Activated CD4-positive, alpha-beta T cell treated with anti-CD3 and anti-CD28 coated beads for 36 hours (primary cell): ENCODE measurements at regions of chr9 and their contacts with region 1.

Region 1: DNA sequence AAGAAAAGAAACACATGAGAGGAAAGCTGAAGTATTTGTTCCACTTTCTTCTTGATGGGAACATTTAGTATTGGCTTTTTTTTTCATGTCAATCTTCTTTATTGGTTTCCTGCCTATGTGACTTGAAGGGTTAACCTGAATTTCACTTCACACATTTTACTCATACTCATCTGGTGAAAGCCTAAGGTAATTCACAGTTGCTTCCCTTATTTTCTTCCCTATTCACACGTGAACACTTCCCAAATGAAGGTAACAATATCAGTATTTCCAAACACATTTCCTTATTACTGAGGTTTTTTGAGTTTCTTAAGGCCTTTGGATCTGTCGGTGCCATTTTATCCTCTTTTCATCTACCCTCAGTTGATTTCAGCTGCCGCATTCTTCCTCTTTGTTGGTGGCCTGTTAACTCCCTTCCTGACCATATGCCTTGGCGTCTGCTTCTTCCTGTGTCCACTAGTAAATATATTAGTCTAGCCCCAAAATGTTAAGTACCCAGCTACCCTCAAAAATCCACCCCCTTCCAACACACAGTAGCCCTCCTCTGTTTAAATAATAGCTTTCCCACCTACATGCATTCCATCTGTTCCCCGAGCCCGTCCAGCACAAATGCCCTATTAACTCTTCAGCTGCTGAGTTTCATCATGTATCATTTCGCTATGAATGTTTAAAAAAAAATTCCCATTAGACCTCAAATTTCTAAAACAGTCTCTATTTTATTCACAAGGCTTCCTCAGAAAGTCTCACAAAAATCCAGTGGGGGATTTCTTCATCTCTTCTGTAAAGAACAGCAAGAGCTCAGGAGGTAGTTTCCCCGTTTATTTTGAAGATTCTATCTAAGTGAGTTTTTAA is 97.3 kb downstream of the USP20 start:
- DNase-seq: no peak
- ATAC-seq: peak; percentile 31
- H3K4me3 Mint-ChIP-seq: peak overlapping the region; percentile 59
- H3K27ac Mint-ChIP-seq: peak overlapping the region; percentile 92
- H3K4me1 Mint-ChIP-seq: peaks cover 69% of the 10 kb centered on the region
- H3K27me3 Mint-ChIP-seq: no peaks in the 10 kb centered on the region

Region 2: DNA sequence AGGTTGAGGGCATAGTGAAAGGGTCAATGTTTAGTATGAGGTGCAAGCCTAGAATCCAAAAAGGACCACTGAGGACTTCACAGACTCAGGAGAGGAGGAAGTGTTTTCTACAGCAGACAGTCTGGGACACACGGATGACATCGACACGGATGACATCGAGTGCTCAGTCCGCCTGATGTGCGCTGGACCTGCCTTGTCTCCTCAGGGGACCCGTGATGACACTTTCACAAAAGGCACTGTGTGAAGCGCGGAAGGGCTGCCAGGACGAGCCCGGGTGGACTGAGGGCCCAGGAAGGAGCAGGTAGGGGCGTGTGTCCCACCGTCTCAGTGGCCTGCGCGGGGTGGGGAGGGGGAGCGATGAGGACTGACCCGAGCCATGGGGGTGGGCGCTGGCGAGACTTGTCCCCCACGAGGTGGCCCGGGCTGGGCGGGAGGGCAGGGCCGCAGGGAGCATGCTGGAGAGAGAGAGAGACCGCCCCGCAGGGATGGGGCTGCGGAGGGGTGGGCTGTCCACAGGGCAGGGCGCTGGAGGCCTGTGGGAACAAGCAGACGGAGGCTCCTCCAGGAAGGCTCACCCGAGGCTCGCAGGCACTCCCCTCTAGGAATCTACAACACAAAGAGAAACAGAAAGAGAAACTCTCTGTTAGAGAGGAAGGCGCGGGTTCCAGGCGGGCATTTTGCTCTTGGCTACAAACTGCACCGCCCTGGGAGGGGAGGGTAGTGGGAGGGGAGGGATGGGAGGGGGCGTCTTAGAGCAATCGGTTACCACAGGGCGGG is 42.4 kb before region 1 on chr9:
- CTCF ChIA-PET with region 1: interaction called, 6 read pairs
- POLR2A ChIA-PET with region 1: interaction called, 15 read pairs
- intact Hi-C with region 1: loop called (anchors 2 kb)
- DNase-seq: peak; percentile 93
- ATAC-seq: peak; percentile 6
- H3K4me3 Mint-ChIP-seq: peak overlapping the region; percentile 97
- H3K27ac Mint-ChIP-seq: peak overlapping the region; percentile 99
- H3K4me1 Mint-ChIP-seq: peaks cover 78% of the 10 kb centered on the region
- H3K27me3 Mint-ChIP-seq: no peaks in the 10 kb centered on the region

Region 3: DNA sequence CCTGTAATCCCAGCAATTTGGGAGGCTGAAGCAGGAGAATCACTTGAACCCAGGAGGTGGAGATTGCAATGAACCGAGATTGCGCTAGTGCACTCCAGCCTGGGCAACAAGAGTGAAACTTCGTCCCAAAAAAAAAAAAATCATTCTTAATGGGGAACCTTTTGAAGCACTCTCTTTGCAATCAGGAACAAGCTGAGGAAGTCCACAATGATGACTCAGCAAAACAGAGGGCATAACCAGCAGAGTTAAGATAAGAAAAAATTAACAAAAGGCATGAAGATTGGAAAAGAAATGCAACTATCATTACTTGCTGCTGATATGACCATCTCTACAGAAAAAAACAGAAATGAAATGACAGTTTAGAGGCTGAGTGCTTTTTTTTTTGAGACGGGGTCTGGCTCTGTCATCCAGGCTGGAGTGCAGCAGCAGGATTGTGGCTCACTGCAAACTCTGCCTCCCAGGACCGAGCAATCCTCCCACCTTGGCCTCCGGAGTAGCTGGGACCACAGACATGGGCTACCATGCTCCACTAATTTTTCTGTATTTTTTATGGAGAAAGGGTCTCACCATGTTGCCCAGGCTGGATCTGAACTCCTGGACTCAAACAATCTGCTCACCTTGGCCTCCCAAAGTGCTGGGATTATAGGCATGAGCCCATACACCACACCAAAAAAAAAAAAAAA is 22.5 kb after region 1 on chr9:
- CTCF ChIA-PET with region 1: interaction called, 3 read pairs
- POLR2A ChIA-PET with region 1: interaction called, 3 read pairs
- intact Hi-C with region 1: loop called in 1 of 2 experiments (anchors 1 kb)
- DNase-seq: no peak
- ATAC-seq: no peak
- H3K4me3 Mint-ChIP-seq: no peak overlapping the region
- H3K27ac Mint-ChIP-seq: peak overlapping the region; percentile 66
- H3K4me1 Mint-ChIP-seq: peaks cover 61% of the 10 kb centered on the region
- H3K27me3 Mint-ChIP-seq: no peaks in the 10 kb centered on the region

Region 4: DNA sequence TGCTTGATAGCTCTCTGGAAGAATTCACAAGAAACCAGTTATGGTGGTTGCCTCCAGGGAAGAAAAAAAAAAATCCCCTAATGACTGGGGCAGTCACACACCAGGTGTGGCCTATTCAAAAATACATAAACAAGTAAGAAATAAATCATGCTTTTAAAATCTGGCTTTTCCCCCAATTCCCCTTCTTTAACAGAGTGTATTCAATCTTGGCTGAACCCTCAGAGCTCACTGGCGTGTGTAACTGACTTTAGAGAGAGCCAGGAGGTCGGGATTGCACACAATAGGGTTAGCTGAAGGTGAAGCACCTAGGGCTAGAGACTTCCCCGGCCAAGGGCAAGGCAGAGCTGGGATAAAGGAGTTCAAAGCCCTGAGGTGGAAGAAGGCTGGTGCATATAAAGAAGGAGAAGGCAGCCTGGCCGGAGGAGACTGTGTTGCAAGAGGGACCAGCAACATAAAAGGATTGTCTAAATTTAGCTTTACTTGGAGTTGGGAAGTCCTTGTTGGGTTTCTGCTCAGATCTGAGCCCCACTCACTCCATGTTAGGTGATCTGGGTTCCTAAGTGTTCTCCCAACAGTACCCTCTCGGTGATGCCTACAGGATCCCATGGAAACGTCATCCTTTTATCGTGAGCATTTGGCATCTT is 90.7 kb after region 1 on chr9:
- CTCF ChIA-PET with region 1: interaction called, 4 read pairs
- POLR2A ChIA-PET with region 1: interaction called, 3 read pairs
- intact Hi-C with region 1: loop called in 1 of 2 experiments (anchors 5 kb)
- DNase-seq: no peak
- ATAC-seq: peak; percentile 59
- H3K4me3 Mint-ChIP-seq: peak overlapping the region; percentile 50
- H3K27ac Mint-ChIP-seq: peak overlapping the region; percentile 92
- H3K4me1 Mint-ChIP-seq: peaks cover 97% of the 10 kb centered on the region
- H3K27me3 Mint-ChIP-seq: no peaks in the 10 kb centered on the region

Region 5: DNA sequence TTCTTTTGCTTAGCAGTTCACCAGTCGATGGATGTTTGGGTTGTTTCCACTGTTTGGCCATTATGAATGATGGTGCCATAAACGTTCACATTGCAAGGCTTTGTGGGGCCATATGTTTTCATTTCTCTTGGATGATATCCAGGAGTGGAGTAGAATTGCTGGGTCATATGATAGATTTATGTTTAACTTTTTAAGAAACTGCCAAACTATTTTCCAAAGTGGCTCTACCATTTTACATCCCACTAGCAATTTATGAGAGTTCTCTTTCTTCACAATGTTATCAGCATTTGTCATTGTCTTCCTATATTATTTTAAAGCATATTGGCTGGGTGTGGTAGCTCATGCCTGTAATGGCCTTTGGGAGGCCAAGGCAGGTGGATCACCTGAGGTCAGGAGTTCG is 126.4 kb after region 1 on chr9:
- CTCF ChIA-PET with region 1: no interaction called
- POLR2A ChIA-PET with region 1: no interaction called
- intact Hi-C with region 1: no loop called
- DNase-seq: no peak
- ATAC-seq: no peak
- H3K4me3 Mint-ChIP-seq: no peak overlapping the region
- H3K27ac Mint-ChIP-seq: no peak overlapping the region
- H3K4me1 Mint-ChIP-seq: peaks cover 24% of the 10 kb centered on the region
- H3K27me3 Mint-ChIP-seq: no peaks in the 10 kb centered on the region